ENCODE measurements at regions of chr7 and their contacts with region 1.

Region 1: DNA sequence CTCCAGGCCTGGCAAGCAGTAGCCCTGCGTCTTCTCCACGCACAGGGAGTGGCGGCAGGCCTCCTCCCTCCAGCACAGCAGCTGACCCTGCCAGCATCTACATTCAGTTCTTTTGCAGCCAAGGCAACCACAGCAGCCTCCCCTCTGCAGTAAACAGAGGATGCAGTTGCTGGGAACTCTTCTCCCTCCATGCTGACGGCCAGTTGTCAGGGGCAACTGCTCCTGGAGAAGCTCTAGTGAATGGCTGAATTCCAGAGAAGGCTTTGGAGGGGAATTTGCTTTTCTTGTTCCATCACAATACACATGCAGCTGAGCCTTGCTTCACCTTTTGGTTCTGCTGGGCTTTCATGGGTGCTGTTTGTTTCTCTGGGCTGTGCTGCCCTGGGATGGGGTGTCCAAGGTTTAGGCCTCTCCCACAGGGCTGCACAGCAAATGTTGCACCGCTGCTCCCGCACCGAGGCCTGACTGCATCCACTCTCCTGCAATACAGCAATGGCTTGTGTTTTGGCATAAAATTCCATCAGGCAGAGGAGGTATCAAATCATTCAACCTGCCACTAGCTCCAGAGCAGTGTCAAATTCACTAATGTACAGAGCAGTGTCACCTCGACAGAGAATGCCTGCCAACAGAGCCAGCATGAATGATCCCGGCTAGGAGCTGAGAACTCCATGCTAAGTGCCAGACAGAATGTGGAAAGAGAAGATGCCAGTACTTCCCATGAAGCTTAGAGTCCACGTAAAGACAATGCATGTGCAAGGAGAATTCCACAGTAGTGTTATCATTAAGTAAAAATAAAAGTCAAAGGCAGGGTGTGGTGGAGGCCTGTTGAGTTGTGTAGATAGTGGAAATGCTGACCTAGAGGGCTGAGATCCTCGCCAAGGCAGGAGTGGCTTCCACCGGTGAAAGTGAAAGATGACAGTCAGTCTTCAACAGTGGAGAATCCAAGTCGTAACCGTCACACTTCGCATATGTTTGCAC is 399.6 kb downstream of the DPP6 start:
- DNase-seq: no peak
- ATAC-seq: peak in 1 of 2 donors; percentile 46
- H3K4me3 ChIP-seq: no peak overlapping the region
- H3K27ac ChIP-seq: peak overlapping the region in 2 of 4 donors; percentile 34 to 68
- H3K4me1 ChIP-seq: peaks cover 0 to 5% of the 10 kb centered on the region in 2 donors
- H3K27me3 ChIP-seq: no peaks in the 10 kb centered on the region
- CTCF ChIP-seq: no peak
- POLR2A ChIP-seq: no peak

Region 2: DNA sequence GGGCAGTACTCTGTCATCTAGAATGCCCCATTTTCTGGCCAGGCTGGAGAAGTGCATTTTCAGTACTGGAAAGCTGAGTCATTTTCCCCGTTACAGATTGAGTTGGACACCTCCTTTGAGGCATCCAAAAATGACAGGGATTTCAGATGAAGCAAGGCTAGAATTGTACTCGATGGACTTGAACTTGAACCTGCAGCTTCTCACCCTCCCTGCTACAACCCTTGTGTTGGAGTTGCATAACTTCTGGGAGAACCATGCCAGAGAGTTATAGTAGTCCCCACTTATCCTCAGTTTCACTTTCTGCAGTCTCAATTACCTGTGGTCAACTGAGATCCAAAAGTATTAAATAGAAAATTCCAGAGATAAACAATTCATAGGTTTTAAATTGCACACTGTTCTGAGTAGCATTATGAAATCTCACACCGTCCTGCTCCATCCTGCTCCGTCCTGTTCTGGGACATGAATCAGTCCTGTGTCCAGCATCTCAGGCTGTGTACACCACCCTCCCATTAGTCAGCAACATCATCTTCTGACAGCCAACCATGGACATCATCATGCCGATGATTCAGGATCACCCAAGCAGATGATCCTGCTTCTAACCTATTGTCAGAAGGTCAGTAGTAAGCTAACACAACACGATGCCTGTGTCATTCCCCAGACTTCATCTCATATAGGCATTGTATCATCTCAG is 35.9 kb before region 1 on chr7:
- in situ Hi-C with region 1: no loop called
- intact Hi-C with region 1: loop called (anchors 5 kb)
- DNase-seq: peak; percentile 9 to 55
- ATAC-seq: peak; percentile 88 to 90
- H3K4me3 ChIP-seq: no peak overlapping the region
- H3K27ac ChIP-seq: peak overlapping the region in 3 of 4 donors; percentile 49 to 61 (median 53)
- H3K4me1 ChIP-seq: no peaks in the 10 kb centered on the region
- H3K27me3 ChIP-seq: no peaks in the 10 kb centered on the region
- CTCF ChIP-seq: no peak
- POLR2A ChIP-seq: peak in 1 of 2 donors; percentile 21

Region 3: DNA sequence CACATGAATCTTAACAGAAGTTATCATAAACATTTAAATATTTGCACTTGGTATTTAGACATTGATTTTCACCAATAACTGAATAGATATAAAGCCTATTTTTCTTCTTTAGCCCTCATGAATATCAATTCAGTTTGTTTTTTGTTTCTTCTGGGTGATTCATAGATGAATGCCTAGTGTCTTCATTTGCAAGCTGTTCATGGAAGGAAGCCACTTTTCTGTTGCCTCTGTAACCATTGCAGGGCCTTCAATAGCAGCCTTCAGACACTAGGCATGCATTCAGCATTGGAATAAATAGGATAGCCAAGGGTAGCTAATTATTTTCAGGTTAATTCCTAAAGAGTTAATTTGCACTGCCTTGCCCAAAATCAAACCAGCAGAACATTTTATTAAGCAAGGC is 24.2 kb before region 1 on chr7:
- in situ Hi-C with region 1: no loop called
- intact Hi-C with region 1: no loop called
- DNase-seq: no peak
- ATAC-seq: no peak
- H3K4me3 ChIP-seq: no peak overlapping the region
- H3K27ac ChIP-seq: peak overlapping the region in 1 of 4 donors; percentile 42
- H3K4me1 ChIP-seq: peaks cover 12 to 21% of the 10 kb centered on the region in 2 donors
- H3K27me3 ChIP-seq: no peaks in the 10 kb centered on the region
- CTCF ChIP-seq: no peak
- POLR2A ChIP-seq: no peak